Heart left ventricle (tissue), 16 donors: ENCODE measurements at regions of chr4 and their contacts with region 1.

Region 1: DNA sequence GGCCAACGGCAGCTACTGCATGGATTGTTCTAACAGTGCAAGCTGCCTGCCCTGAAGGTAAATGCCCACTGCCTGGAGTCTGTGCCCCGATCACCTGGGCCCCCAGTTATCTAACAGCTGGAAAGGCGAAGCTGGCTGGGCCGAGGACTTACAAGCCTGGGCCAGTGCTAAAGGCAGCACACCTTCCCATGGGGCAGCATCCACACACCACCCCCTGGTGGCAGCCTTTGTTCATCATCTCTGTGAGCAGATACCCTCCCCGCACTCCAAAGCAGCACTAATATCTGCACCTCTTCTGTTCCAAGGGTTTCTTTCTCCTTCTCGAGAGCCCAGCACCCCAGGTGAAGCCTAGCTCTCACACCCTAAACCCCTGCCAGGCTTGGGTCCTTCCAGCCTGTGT is 7.6 kb downstream of the SLC2A9 start:
- DNase-seq: peak in 2 of 5 donors; percentile 46 to 58
- ATAC-seq: peak; percentile 40 to 71 (median 69)
- H3K4me3 ChIP-seq: no peak overlapping the region
- H3K27ac ChIP-seq: no peak overlapping the region
- H3K4me1 ChIP-seq: peaks cover 0 to 17% (median 6%) of the 10 kb centered on the region in 12 donors
- H3K27me3 ChIP-seq: no peaks in the 10 kb centered on the region
- CTCF ChIP-seq: peak; percentile 34 to 60 (median 39)
- POLR2A ChIP-seq: no peak

Region 2: GRCh38 chr4:9924750-9925149 is 89.0 kb before region 1 on chr4:
- intact Hi-C with region 1: loop called in 3 of 10 experiments (anchors 5 kb)
- DNase-seq: no peak
- ATAC-seq: peak; percentile 14 to 44 (median 32)
- H3K4me3 ChIP-seq: no peak overlapping the region
- H3K27ac ChIP-seq: no peak overlapping the region
- H3K4me1 ChIP-seq: peaks cover 0 to 13% (median 0%) of the 10 kb centered on the region in 12 donors
- H3K27me3 ChIP-seq: no peaks in the 10 kb centered on the region
- CTCF ChIP-seq: no peak
- POLR2A ChIP-seq: no peak

Region 3: GRCh38 chr4:10395971-10396580 is 382.4 kb after region 1 on chr4:
- intact Hi-C with region 1: loop called in 2 of 10 experiments (anchors 5 kb)
- DNase-seq: no peak
- ATAC-seq: no peak
- H3K4me3 ChIP-seq: no peak overlapping the region
- H3K27ac ChIP-seq: no peak overlapping the region
- H3K4me1 ChIP-seq: no peaks in the 10 kb centered on the region
- H3K27me3 ChIP-seq: no peaks in the 10 kb centered on the region
- CTCF ChIP-seq: no peak
- POLR2A ChIP-seq: no peak